B cell (primary cell): ENCODE measurements at regions of chr4 and their contacts with region 1.

Region 1: DNA sequence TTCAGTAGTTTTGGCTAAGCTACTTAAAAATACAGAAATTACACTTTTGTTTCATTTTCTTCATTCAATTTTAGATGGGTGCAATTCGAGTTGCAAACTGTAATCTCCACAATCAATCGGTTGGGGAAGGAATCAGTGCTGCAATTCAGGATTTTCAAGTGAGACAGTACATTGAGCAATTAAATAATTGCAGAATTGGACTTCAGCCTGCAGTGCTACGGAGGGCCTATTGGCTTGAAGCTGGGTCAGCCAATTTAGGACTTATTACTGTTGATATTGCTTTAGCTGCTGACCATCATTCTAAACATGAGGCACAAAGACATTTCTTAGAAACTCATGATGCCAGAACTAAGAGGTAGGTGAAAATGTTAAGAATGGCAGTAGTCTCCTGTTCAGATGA is 77.7 kb downstream of the BLTP1 start:
- DNase-seq: no peak
- ATAC-seq: no peak
- H3K4me3 ChIP-seq: no peak overlapping the region
- H3K4me3 Mint-ChIP-seq: no peak overlapping the region
- H3K27ac ChIP-seq: no peak overlapping the region
- H3K27ac Mint-ChIP-seq: no peak overlapping the region
- H3K4me1 ChIP-seq: no peaks in the 10 kb centered on the region
- H3K4me1 Mint-ChIP-seq: no peaks in the 10 kb centered on the region
- H3K27me3 ChIP-seq: no peaks in the 10 kb centered on the region
- H3K27me3 Mint-ChIP-seq: no peaks in the 10 kb centered on the region
- CTCF ChIP-seq: no peak

Region 2: DNA sequence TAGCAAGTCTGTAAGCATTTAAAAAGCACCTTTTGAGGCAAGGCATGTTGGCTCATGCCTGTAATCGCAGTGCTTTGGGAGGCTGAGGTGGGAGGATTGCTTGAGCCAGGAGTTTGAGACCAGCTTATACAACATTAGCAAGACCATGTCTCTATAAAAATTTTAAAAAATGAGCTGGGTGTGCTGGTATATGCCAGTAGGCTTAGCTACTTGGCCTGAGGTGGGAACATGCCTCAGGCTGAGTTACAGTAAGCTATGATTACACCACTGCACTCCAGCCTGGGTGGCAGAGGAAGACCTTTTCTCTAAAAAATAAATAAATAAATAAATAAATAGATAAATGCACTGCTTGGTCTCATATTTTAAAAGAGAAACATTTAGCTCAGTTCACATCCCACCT is 50.9 kb before region 1 on chr4:
- CTCF ChIA-PET with region 1: interaction called, 3 read pairs
- POLR2A ChIA-PET with region 1: no interaction called
- intact Hi-C with region 1: loop called (anchors 10 kb)
- DNase-seq: no peak
- ATAC-seq: no peak
- H3K4me3 ChIP-seq: no peak overlapping the region
- H3K4me3 Mint-ChIP-seq: no peak overlapping the region
- H3K27ac ChIP-seq: no peak overlapping the region
- H3K27ac Mint-ChIP-seq: no peak overlapping the region
- H3K4me1 ChIP-seq: no peaks in the 10 kb centered on the region
- H3K4me1 Mint-ChIP-seq: no peaks in the 10 kb centered on the region
- H3K27me3 ChIP-seq: no peaks in the 10 kb centered on the region
- H3K27me3 Mint-ChIP-seq: no peaks in the 10 kb centered on the region
- CTCF ChIP-seq: no peak